GM10248 (cell line): ENCODE measurements at regions of chr6 and their contacts with region 1.

Region 1: DNA sequence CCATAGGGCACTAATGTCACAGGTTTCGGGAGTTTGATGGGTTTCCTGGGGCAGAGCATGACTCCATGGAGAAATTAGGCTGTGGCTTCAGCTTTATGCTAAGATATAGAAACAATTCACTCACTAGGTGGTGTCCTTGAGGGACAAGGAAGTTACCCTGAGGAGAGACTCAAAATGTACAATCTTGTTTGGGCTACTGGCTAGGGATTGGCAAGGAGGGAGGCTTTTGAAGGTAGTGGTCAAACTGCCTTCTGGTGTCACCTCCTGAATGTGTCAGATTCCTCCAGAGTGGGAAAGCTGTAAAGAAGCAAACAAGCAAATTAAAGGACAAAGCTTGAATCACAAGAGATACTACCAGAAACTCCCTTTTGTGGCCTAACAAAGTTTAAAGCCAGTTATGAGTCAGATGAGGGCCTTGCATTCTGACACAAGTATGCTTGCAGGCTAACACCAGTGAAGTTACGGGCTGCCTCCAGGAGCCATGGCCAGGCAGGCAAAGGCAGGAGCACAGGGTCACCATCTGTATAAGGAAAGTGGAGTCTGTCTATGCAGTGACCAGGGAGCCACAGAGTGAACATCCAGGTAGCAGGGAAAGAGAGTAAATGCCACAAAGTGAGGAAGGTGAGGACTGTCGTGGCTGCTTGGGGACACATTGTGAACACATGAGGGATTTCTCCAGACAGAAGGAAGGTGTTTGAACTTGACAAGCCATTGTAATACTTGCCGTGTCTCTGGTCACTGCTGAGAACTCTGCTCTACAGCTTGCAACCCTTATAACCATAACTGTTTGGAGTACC is 107.7 kb upstream of the DTNBP1 start:
- DNase-seq: peak; percentile 51
- CTCF ChIP-seq: peak; percentile 24

Region 2: GRCh38 chr6:15755526-15755925 is 15.0 kb before region 1 on chr6:
- CTCF ChIA-PET with region 1: interaction called, 11 read pairs
- POLR2A ChIA-PET with region 1: no interaction called
- DNase-seq: no peak
- CTCF ChIP-seq: no peak

Region 3: GRCh38 chr6:15781890-15782289 is 11.3 kb after region 1 on chr6:
- CTCF ChIA-PET with region 1: interaction called, 12 read pairs
- POLR2A ChIA-PET with region 1: no interaction called
- DNase-seq: no peak
- CTCF ChIP-seq: no peak